T-cell (primary cell): ENCODE measurements at regions of chr4 and their contacts with region 1.

Region 1: GRCh38 chr4:52665592-52665991 is 6.5 kb upstream of the USP46 start:
- DNase-seq: peak in 1 of 35 experiments; percentile 37
- ATAC-seq: peak in 3 of 4 experiments; percentile 38 to 50 (median 49)
- H3K4me3 ChIP-seq: no peak overlapping the region
- H3K4me3 Mint-ChIP-seq: no peak overlapping the region
- H3K27ac ChIP-seq: no peak overlapping the region
- H3K27ac Mint-ChIP-seq: no peak overlapping the region
- H3K4me1 ChIP-seq: peaks cover 0 to under 1% of the 10 kb centered on the region in 2 experiments
- H3K4me1 Mint-ChIP-seq: peaks cover 0 to 5% (median 3%) of the 10 kb centered on the region in 3 donors
- H3K27me3 ChIP-seq: peaks cover 0 to 11% of the 10 kb centered on the region in 2 experiments
- H3K27me3 Mint-ChIP-seq: peaks cover 16 to 43% of the 10 kb centered on the region in 2 donors

Region 2: GRCh38 chr4:51831133-51831532 is 834.5 kb before region 1 on chr4:
- CTCF ChIA-PET with region 1: interaction called in 1 of 2 experiments, 12 read pairs
- POLR2A ChIA-PET with region 1: no interaction called
- DNase-seq: peak; percentile 29 to 74 (median 58)
- ATAC-seq: peak; percentile 34 to 82 (median 70)
- H3K4me3 ChIP-seq: no peak overlapping the region
- H3K4me3 Mint-ChIP-seq: no peak overlapping the region
- H3K27ac ChIP-seq: no peak overlapping the region
- H3K27ac Mint-ChIP-seq: no peak overlapping the region
- H3K4me1 ChIP-seq: no peaks in the 10 kb centered on the region
- H3K4me1 Mint-ChIP-seq: no peaks in the 10 kb centered on the region
- H3K27me3 ChIP-seq: peaks cover 0 to 3% of the 10 kb centered on the region in 2 experiments
- H3K27me3 Mint-ChIP-seq: peaks cover 10 to 16% of the 10 kb centered on the region in 2 donors

Region 3: GRCh38 chr4:52638717-52639116 is 26.9 kb before region 1 on chr4:
- CTCF ChIA-PET with region 1: no interaction called
- POLR2A ChIA-PET with region 1: no interaction called
- DNase-seq: no peak
- ATAC-seq: no peak
- H3K4me3 ChIP-seq: no peak overlapping the region
- H3K4me3 Mint-ChIP-seq: no peak overlapping the region
- H3K27ac ChIP-seq: no peak overlapping the region
- H3K27ac Mint-ChIP-seq: no peak overlapping the region
- H3K4me1 ChIP-seq: no peaks in the 10 kb centered on the region
- H3K4me1 Mint-ChIP-seq: peaks cover 5 to 56% (median 11%) of the 10 kb centered on the region in 3 donors
- H3K27me3 ChIP-seq: no peaks in the 10 kb centered on the region
- H3K27me3 Mint-ChIP-seq: no peaks in the 10 kb centered on the region

Region 4: DNA sequence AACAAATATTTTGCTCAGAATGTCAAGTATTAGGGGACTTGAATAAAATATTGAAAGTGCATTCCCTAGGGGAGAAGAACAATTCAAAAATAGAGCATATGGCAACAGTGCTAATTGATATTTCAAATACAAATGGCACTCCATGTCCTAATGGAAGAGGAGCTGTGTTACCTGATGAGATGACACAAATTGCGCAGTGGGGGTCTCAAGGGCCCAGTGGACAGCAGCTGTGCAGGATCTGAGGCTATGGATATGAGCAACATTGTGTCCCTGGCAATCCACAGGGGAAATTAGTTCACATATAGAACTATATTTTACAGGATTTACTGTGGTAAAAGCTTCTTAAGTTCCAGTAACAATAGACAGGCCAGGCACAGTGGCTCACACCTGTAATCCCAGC is 10.9 kb after region 1 on chr4:
- CTCF ChIA-PET with region 1: no interaction called
- POLR2A ChIA-PET with region 1: no interaction called
- DNase-seq: no peak
- ATAC-seq: no peak
- H3K4me3 ChIP-seq: no peak overlapping the region
- H3K4me3 Mint-ChIP-seq: no peak overlapping the region
- H3K27ac ChIP-seq: no peak overlapping the region
- H3K27ac Mint-ChIP-seq: no peak overlapping the region
- H3K4me1 ChIP-seq: no peaks in the 10 kb centered on the region
- H3K4me1 Mint-ChIP-seq: no peaks in the 10 kb centered on the region
- H3K27me3 ChIP-seq: peaks cover 0 to 4% of the 10 kb centered on the region in 2 experiments
- H3K27me3 Mint-ChIP-seq: peaks cover 2 to 7% of the 10 kb centered on the region in 2 donors

Region 5: DNA sequence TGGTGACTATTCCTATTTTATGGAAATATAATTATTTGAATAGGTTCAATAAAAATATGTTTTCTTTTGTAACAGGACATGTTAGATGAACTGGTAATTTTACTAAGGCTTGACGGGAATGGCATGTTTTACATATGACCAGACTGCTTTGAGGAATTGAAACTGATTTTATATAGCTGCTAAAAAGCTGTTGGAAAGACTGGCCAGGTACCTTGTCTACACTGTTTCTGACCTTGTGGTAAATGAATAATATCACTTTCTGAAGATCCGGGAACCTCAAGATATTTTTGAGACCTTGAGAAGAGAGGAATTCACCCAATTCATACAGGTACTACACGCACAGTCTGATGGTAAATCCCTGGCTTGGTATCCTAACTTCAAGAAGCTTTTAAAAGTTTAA is 35.6 kb after region 1 on chr4:
- CTCF ChIA-PET with region 1: no interaction called
- POLR2A ChIA-PET with region 1: no interaction called
- DNase-seq: no peak
- ATAC-seq: no peak
- H3K4me3 ChIP-seq: no peak overlapping the region
- H3K4me3 Mint-ChIP-seq: no peak overlapping the region
- H3K27ac ChIP-seq: no peak overlapping the region
- H3K27ac Mint-ChIP-seq: no peak overlapping the region
- H3K4me1 ChIP-seq: no peaks in the 10 kb centered on the region
- H3K4me1 Mint-ChIP-seq: peaks cover 0 to 5% (median 4%) of the 10 kb centered on the region in 3 donors
- H3K27me3 ChIP-seq: peaks cover 0 to 2% of the 10 kb centered on the region in 2 experiments
- H3K27me3 Mint-ChIP-seq: peaks cover 4 to 7% of the 10 kb centered on the region in 2 donors

Region 6: GRCh38 chr4:52748432-52748831 is 82.8 kb after region 1 on chr4:
- CTCF ChIA-PET with region 1: no interaction called
- POLR2A ChIA-PET with region 1: no interaction called
- DNase-seq: no peak
- ATAC-seq: no peak
- H3K4me3 ChIP-seq: no peak overlapping the region
- H3K4me3 Mint-ChIP-seq: no peak overlapping the region
- H3K27ac ChIP-seq: no peak overlapping the region
- H3K27ac Mint-ChIP-seq: no peak overlapping the region
- H3K4me1 ChIP-seq: peaks cover 2 to 12% of the 10 kb centered on the region in 2 experiments
- H3K4me1 Mint-ChIP-seq: peaks cover 6 to 15% (median 10%) of the 10 kb centered on the region in 3 donors
- H3K27me3 ChIP-seq: peaks cover 12 to 39% of the 10 kb centered on the region in 2 experiments
- H3K27me3 Mint-ChIP-seq: peaks cover 40 to 62% of the 10 kb centered on the region in 2 donors